CD4-positive, alpha-beta T cell (primary cell): ENCODE measurements at regions of chr7 and their contacts with region 1.

Region 1: GRCh38 chr7:73522105-73522872 is at the start of gene BAZ1B:
- DNase-seq: peak; percentile 91 to 98 (median 96)
- ATAC-seq: peak; percentile 93
- H3K4me3 ChIP-seq: peak within 1 kb of the TSS; percentile 67
- H3K4me3 Mint-ChIP-seq: peak within 1 kb of the TSS; percentile 99
- H3K27ac ChIP-seq: peak within 1 kb of the TSS; percentile 87 to 92
- H3K27ac Mint-ChIP-seq: peak within 1 kb of the TSS; percentile 99
- H3K4me1 ChIP-seq: peaks cover 62% of the 10 kb centered on the region
- H3K4me1 Mint-ChIP-seq: peaks cover 74% of the 10 kb centered on the region
- H3K27me3 ChIP-seq: no peaks in the 10 kb centered on the region
- H3K27me3 Mint-ChIP-seq: no peaks in the 10 kb centered on the region
- CTCF ChIP-seq: no peak
- total RNA-seq, gene BAZ1B: 32.8 to 35.5 TPM

Region 2: GRCh38 chr7:73557108-73557396 is 34.8 kb after region 1 on chr7:
- CTCF ChIA-PET with region 1: interaction called, 5 read pairs
- POLR2A ChIA-PET with region 1: interaction called, 80 read pairs
- intact Hi-C with region 1: loop called (anchors 1 kb)
- DNase-seq: peak; percentile 77 to 97 (median 88)
- ATAC-seq: peak; percentile 92
- H3K4me3 ChIP-seq: peak overlapping the region; percentile 96
- H3K4me3 Mint-ChIP-seq: peak overlapping the region; percentile 96
- H3K27ac ChIP-seq: peak overlapping the region; percentile 97 to 98
- H3K27ac Mint-ChIP-seq: peak overlapping the region; percentile 96
- H3K4me1 ChIP-seq: peaks cover 35% of the 10 kb centered on the region
- H3K4me1 Mint-ChIP-seq: peaks cover 39% of the 10 kb centered on the region
- H3K27me3 ChIP-seq: no peaks in the 10 kb centered on the region
- H3K27me3 Mint-ChIP-seq: no peaks in the 10 kb centered on the region
- CTCF ChIP-seq: no peak

Region 3: DNA sequence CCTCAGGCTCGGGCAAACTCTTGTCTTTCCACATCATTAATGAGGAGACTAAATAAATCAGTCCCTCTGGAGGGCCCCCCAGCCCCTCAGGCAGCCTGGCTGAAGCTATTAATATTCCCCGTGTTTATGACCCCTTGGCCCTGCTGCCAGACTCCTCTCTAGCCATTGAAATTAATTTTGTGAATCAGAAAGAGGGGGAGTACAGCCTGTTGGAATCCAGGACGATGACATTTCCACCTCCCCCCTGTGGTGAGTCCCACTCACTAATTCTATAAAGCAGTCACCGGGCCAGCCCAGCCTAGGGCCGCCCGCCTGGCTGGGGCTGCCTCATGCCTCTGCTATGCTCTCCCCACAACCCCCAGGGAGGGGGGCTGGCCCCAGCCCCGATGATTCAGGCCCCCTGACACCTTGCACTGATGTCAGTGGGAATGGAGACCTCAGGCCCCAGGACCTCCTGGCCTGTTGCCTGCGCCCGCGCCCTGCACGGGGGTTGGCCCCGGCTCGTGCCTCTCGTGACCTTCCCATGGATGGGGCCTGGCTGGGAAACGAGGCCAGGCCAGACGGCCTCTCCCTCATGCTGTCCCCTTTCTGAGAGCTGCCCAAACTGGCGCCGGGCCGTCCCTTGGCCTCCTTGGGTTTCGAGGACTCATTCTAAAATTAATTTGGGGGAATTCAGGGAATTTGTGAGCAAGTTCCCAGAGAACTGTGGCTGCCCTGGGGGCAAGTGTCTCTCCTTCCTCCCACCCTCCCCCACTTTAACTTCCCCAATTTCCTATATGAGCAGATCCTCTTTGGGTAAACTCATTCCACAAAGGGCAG is 372.7 kb after region 1 on chr7:
- CTCF ChIA-PET with region 1: no interaction called
- POLR2A ChIA-PET with region 1: no interaction called
- intact Hi-C with region 1: no loop called
- DNase-seq: no peak
- ATAC-seq: no peak
- H3K4me3 ChIP-seq: no peak overlapping the region
- H3K4me3 Mint-ChIP-seq: no peak overlapping the region
- H3K27ac ChIP-seq: no peak overlapping the region
- H3K27ac Mint-ChIP-seq: no peak overlapping the region
- H3K4me1 ChIP-seq: no peaks in the 10 kb centered on the region
- H3K4me1 Mint-ChIP-seq: no peaks in the 10 kb centered on the region
- H3K27me3 ChIP-seq: no peaks in the 10 kb centered on the region
- H3K27me3 Mint-ChIP-seq: peaks cover 11% of the 10 kb centered on the region
- CTCF ChIP-seq: no peak